ENCODE measurements at regions of chr3 and their contacts with region 1.

Region 1: DNA sequence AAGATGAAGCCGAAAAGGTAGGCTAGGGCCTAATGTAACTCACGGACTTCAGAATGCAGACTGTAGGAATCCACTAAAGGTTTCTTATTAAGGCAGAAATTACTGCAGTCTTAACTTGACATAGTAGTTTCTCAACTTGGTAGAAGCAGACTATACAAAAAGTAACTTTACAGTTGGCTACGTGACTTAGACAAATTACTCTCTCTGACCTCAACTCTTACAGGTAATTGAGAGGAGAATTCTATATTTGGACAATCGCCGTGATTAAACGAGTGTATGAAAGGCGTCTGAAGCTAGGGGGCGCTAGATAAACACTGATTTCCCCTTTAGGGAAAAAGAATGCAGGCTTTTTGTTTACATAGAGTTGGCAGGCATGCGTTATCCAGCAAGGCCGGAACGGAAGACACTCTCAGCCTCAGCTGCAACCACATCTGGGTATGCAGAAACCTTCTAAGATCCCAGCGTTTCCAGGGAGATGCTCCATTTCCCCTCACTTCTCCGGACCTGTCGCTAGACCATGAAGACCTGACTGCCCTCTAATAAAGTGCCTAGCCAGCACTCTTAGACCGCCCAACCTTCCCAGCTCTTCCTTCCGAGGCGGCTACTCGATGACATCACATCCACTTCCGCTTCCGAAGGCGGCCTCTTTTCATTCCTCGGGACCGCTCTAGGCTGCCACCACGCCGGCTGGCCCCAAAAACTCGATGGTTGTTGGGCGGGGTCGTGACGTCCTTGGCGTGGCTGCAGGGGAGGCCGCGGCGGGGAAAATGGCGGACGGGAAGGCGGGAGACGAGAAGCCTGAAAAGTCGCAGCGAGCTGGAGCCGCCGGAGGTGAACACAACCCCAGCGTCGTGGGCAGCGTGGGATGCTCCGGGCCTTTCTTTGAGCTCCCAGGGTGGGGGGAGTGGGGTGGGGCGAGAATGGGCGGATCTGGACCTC is at the start of gene PCNP:
- DNase-seq: peak; percentile 98 to 99 (median 99)
- H3K4me3 ChIP-seq: peak within 1 kb of the TSS; percentile 72 to 91
- H3K4me3 Mint-ChIP-seq: peak within 1 kb of the TSS; percentile 92 to 99 (median 97)
- H3K27ac ChIP-seq: peak within 1 kb of the TSS; percentile 98
- H3K27ac Mint-ChIP-seq: peak within 1 kb of the TSS; percentile 95 to 100 (median 99)
- H3K4me1 ChIP-seq: peaks cover 63% of the 10 kb centered on the region
- H3K4me1 Mint-ChIP-seq: peaks cover 46 to 78% (median 62%) of the 10 kb centered on the region in 4 donors
- H3K27me3 ChIP-seq: no peaks in the 10 kb centered on the region
- H3K27me3 Mint-ChIP-seq: no peaks in the 10 kb centered on the region
- total RNA-seq, gene PCNP: 172 to 189 TPM

Region 2: GRCh38 chr3:99817437-99818240 is 1756.1 kb before region 1 on chr3 and contains the start of gene CMSS1:
- CTCF ChIA-PET with region 1: no interaction called
- POLR2A ChIA-PET with region 1: no interaction called
- intact Hi-C with region 1: loop called (anchors 2 kb)
- DNase-seq: peak; percentile 96 to 98 (median 96)
- H3K4me3 ChIP-seq: peak within 1 kb of the TSS; percentile 59 to 73
- H3K4me3 Mint-ChIP-seq: peak within 1 kb of the TSS; percentile 93 to 98 (median 96)
- H3K27ac ChIP-seq: peak within 1 kb of the TSS; percentile 80
- H3K27ac Mint-ChIP-seq: peak within 1 kb of the TSS; percentile 99 to 100 (median 100)
- H3K4me1 ChIP-seq: peaks cover 20% of the 10 kb centered on the region
- H3K4me1 Mint-ChIP-seq: peaks cover 25 to 40% (median 34%) of the 10 kb centered on the region in 4 donors
- H3K27me3 ChIP-seq: no peaks in the 10 kb centered on the region
- H3K27me3 Mint-ChIP-seq: no peaks in the 10 kb centered on the region
- total RNA-seq, gene CMSS1: 18.3 to 20.5 TPM

Region 3: GRCh38 chr3:101069901-101070798 is 503.6 kb before region 1 on chr3:
- CTCF ChIA-PET with region 1: no interaction called
- POLR2A ChIA-PET with region 1: no interaction called
- intact Hi-C with region 1: loop called (anchors 10 kb)
- DNase-seq: peak; percentile 28 to 57 (median 46)
- H3K4me3 ChIP-seq: no peak overlapping the region
- H3K4me3 Mint-ChIP-seq: peak overlapping the region in 1 of 8 donors; percentile 33
- H3K27ac ChIP-seq: no peak overlapping the region
- H3K27ac Mint-ChIP-seq: no peak overlapping the region
- H3K4me1 ChIP-seq: no peaks in the 10 kb centered on the region
- H3K4me1 Mint-ChIP-seq: peaks cover 0 to 1% (median 0%) of the 10 kb centered on the region in 4 donors
- H3K27me3 ChIP-seq: no peaks in the 10 kb centered on the region
- H3K27me3 Mint-ChIP-seq: peaks cover 0 to 11% of the 10 kb centered on the region in 2 donors

Region 4: GRCh38 chr3:101518421-101518871 is 55.3 kb before region 1 on chr3:
- CTCF ChIA-PET with region 1: interaction called, 28 read pairs
- POLR2A ChIA-PET with region 1: interaction called, 60 read pairs
- intact Hi-C with region 1: loop called (anchors 1 kb)
- DNase-seq: peak; percentile 74 to 87 (median 82)
- H3K4me3 ChIP-seq: peak overlapping the region in 1 of 2 donors; percentile 14
- H3K4me3 Mint-ChIP-seq: peak overlapping the region; percentile 37 to 84 (median 60)
- H3K27ac ChIP-seq: peak overlapping the region; percentile 67
- H3K27ac Mint-ChIP-seq: peak overlapping the region; percentile 91 to 99 (median 96)
- H3K4me1 ChIP-seq: peaks cover 64% of the 10 kb centered on the region
- H3K4me1 Mint-ChIP-seq: peaks cover 36 to 66% (median 55%) of the 10 kb centered on the region in 4 donors
- H3K27me3 ChIP-seq: no peaks in the 10 kb centered on the region
- H3K27me3 Mint-ChIP-seq: no peaks in the 10 kb centered on the region

Region 5: GRCh38 chr3:101611023-101611422 is 37.3 kb after region 1 on chr3:
- CTCF ChIA-PET with region 1: no interaction called
- POLR2A ChIA-PET with region 1: no interaction called
- intact Hi-C with region 1: no loop called
- DNase-seq: no peak
- H3K4me3 ChIP-seq: no peak overlapping the region
- H3K4me3 Mint-ChIP-seq: no peak overlapping the region
- H3K27ac ChIP-seq: no peak overlapping the region
- H3K27ac Mint-ChIP-seq: no peak overlapping the region
- H3K4me1 ChIP-seq: no peaks in the 10 kb centered on the region
- H3K4me1 Mint-ChIP-seq: no peaks in the 10 kb centered on the region
- H3K27me3 ChIP-seq: no peaks in the 10 kb centered on the region
- H3K27me3 Mint-ChIP-seq: no peaks in the 10 kb centered on the region

Region 6: GRCh38 chr3:101635954-101636798 is 62.5 kb after region 1 on chr3:
- CTCF ChIA-PET with region 1: no interaction called
- POLR2A ChIA-PET with region 1: interaction called, 5 read pairs
- intact Hi-C with region 1: loop called (anchors 1 kb)
- DNase-seq: peak; percentile 60 to 63 (median 61)
- H3K4me3 ChIP-seq: no peak overlapping the region
- H3K4me3 Mint-ChIP-seq: no peak overlapping the region
- H3K27ac ChIP-seq: no peak overlapping the region
- H3K27ac Mint-ChIP-seq: peak overlapping the region in 2 of 7 donors; percentile 6 to 8
- H3K4me1 ChIP-seq: no peaks in the 10 kb centered on the region
- H3K4me1 Mint-ChIP-seq: peaks cover 0 to 5% (median 4%) of the 10 kb centered on the region in 4 donors
- H3K27me3 ChIP-seq: no peaks in the 10 kb centered on the region
- H3K27me3 Mint-ChIP-seq: no peaks in the 10 kb centered on the region

Region 7: GRCh38 chr3:101724329-101725193 is 150.8 kb after region 1 on chr3 and contains the start of gene CEP97:
- CTCF ChIA-PET with region 1: no interaction called
- POLR2A ChIA-PET with region 1: interaction called, 5 read pairs
- intact Hi-C with region 1: loop called (anchors 1 kb)
- DNase-seq: peak; percentile 87 to 92 (median 90)
- H3K4me3 ChIP-seq: peak within 1 kb of the TSS; percentile 97 to 99
- H3K4me3 Mint-ChIP-seq: peak within 1 kb of the TSS; percentile 98 to 100 (median 99)
- H3K27ac ChIP-seq: peak within 1 kb of the TSS; percentile 90
- H3K27ac Mint-ChIP-seq: peak within 1 kb of the TSS; percentile 92 to 99 (median 99)
- H3K4me1 ChIP-seq: peaks cover 52% of the 10 kb centered on the region
- H3K4me1 Mint-ChIP-seq: peaks cover 31 to 56% (median 37%) of the 10 kb centered on the region in 4 donors
- H3K27me3 ChIP-seq: no peaks in the 10 kb centered on the region
- H3K27me3 Mint-ChIP-seq: no peaks in the 10 kb centered on the region
- total RNA-seq, gene CEP97: 14.8 to 16.8 TPM

Region 8: DNA sequence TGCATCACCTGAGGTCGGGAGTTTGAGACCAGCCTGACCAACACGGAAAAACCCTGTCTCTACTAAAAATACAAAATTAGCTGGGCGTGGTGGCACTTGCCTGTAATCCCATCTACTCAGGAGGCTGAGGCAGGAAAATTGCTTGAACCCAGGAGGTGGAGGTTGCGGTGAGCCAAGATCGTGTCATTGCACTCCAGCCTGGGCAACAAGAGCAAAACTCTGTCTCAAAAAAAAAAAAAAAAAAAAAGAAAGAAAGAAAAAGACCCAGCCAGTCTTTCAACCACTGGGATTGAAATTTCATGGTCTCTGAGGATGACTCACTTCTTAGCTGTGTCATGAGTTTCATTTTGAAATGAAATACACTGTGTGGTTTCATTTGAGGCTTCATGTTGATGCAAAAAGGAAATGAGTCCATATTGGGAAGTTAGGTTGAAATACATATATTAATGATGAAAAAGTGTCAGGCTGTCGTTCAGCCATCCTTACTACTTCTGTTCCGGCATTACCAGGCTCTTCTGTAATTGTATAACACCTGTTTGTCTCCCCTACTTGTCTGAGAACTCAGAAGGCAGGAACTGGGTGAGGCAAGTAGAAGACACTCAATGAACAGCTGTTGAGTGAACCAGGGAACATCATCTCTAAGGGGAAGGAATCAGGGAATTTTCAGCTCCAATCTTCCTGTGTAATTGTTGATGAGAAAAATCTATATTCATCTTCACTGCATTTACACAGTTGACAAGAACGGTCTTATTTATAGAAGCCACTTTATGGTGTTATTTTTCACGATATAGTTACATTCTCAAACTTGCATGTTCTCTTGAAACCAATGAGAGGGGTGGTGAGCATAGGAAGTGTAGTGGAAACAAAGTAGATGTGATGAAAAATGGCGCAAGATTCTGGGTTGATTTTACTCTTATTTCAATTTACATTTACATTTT is 363.0 kb after region 1 on chr3:
- CTCF ChIA-PET with region 1: no interaction called
- POLR2A ChIA-PET with region 1: no interaction called
- intact Hi-C with region 1: loop called (anchors 10 kb)
- DNase-seq: peak; percentile 52 to 71 (median 65)
- H3K4me3 ChIP-seq: no peak overlapping the region
- H3K4me3 Mint-ChIP-seq: peak overlapping the region; percentile 61 to 87 (median 71)
- H3K27ac ChIP-seq: no peak overlapping the region
- H3K27ac Mint-ChIP-seq: peak overlapping the region; percentile 75 to 92 (median 86)
- H3K4me1 ChIP-seq: peaks cover 63% of the 10 kb centered on the region
- H3K4me1 Mint-ChIP-seq: peaks cover 18 to 26% (median 22%) of the 10 kb centered on the region in 4 donors
- H3K27me3 ChIP-seq: no peaks in the 10 kb centered on the region
- H3K27me3 Mint-ChIP-seq: no peaks in the 10 kb centered on the region